CD4-positive, alpha-beta memory T cell (primary cell): ENCODE measurements at regions of chr1 and their contacts with region 1.

Region 1: DNA sequence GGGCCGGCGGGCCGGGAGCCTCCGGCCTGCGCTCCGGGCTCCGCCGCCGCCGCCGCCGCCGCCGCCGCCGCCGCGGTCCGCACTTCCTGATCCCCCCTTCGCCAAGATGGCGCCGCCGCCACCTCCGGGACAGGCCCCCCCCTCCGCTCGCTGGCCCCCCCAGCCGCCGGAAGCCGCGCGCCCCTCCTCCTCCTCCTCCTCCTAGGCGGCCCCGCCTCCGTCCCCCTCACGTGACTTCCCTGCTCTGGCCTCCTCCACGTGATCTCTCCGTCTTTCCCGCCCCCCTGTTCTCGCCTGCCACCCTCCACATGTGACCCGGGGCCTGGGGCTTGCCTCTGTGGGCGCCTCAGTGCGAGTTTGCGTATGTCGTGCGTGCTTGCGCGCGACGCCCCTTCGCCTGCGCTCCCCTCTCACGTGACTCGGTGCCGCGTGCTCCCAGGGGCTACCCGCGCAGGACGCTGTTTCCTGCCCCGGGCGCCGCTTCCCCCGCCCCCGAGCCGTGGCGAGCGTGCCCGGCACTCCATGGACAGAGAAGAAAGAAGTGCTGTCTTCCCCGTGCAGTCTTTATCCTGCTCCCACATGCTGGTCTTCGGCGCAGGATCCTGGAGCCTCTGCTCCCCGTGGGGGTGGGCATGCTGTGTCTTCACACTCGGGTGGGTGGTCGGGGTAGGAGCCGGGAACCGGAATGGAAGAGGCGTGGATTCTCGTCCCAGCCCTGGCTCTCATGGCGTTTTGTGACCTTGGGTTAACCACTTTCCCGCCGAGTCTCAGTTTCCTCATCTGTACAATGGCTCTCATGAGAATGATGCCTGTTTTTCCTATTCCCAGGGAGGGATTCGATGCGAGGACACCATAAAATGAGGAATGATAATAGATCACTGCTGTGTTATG is at the start of gene UBE2Q1:
- DNase-seq: peak; percentile 99 to 100 (median 100)
- H3K4me3 ChIP-seq: peak within 1 kb of the TSS; percentile 83 to 84
- H3K4me3 Mint-ChIP-seq: peak within 1 kb of the TSS; percentile 91 to 97 (median 94)
- H3K27ac ChIP-seq: peak within 1 kb of the TSS; percentile 82
- H3K27ac Mint-ChIP-seq: peak within 1 kb of the TSS; percentile 85 to 96 (median 94)
- H3K4me1 ChIP-seq: peaks cover 38% of the 10 kb centered on the region
- H3K4me1 Mint-ChIP-seq: peaks cover 22 to 45% (median 38%) of the 10 kb centered on the region in 4 donors
- H3K27me3 ChIP-seq: no peaks in the 10 kb centered on the region
- H3K27me3 Mint-ChIP-seq: no peaks in the 10 kb centered on the region
- total RNA-seq, gene UBE2Q1: 112 to 132 TPM

Region 2: DNA sequence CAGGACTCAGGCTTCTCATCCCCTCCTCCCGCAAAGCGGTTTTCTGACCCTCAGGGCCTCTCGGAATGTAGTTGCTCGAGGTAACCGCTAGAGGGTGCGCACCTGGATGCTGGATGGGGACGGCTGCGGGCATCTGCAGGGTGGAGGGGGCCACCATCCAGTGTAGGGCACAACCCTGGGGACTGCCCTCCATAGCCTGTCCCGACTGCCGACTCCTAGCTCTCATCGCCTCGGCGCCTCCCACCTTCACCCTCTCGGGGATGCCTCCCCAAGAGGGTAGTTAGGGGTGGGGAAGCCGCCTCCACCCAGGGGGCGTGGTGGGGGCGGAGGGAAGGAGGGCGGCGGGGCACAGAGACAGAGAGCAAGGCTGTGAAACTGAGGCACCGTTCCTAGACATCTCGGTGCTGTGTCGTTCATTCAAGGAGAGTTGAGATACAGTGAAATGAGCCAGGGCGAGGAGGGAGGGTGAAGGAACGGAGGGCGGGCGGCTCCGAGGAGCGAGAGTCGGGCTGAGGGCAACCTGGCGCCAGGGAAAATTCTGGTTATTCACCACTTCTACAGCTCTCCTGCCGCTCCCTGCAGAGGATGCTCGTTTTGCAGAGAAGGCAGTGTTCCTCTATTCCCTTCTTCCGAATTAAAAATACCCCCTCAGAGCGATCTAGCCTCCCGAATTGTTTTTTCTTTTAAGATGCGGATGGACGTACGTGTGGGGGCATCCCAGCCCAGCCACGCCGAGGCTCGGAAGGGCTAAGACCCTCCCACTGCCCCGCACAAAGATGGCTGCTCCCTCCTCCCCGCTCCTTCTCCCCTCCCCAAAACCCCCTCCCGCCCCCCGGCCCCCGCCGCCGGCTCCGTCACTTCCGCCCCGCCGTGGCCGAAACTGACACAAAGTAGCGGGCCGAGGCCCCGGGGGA is 233.9 kb before region 1 on chr1 and contains the start of gene ATP8B2:
- CTCF ChIA-PET with region 1: no interaction called
- POLR2A ChIA-PET with region 1: interaction called, 3 read pairs
- intact Hi-C with region 1: loop called (anchors 10 kb)
- DNase-seq: peak; percentile 79 to 85 (median 81)
- H3K4me3 ChIP-seq: peak within 1 kb of the TSS; percentile 61 to 66
- H3K4me3 Mint-ChIP-seq: peak within 1 kb of the TSS; percentile 93 to 99 (median 98)
- H3K27ac ChIP-seq: peak within 1 kb of the TSS; percentile 89
- H3K27ac Mint-ChIP-seq: peak within 1 kb of the TSS; percentile 86 to 98 (median 96)
- H3K4me1 ChIP-seq: peaks cover 41% of the 10 kb centered on the region
- H3K4me1 Mint-ChIP-seq: peaks cover 22 to 49% (median 32%) of the 10 kb centered on the region in 4 donors
- H3K27me3 ChIP-seq: no peaks in the 10 kb centered on the region
- H3K27me3 Mint-ChIP-seq: no peaks in the 10 kb centered on the region
- total RNA-seq, gene ATP8B2: 186 TPM

Region 3: GRCh38 chr1:154533952-154534844 is 24.6 kb before region 1 on chr1:
- CTCF ChIA-PET with region 1: no interaction called
- POLR2A ChIA-PET with region 1: no interaction called
- intact Hi-C with region 1: no loop called
- DNase-seq: peak in 1 of 5 donors; percentile 10
- H3K4me3 ChIP-seq: no peak overlapping the region
- H3K4me3 Mint-ChIP-seq: no peak overlapping the region
- H3K27ac ChIP-seq: no peak overlapping the region
- H3K27ac Mint-ChIP-seq: no peak overlapping the region
- H3K4me1 ChIP-seq: no peaks in the 10 kb centered on the region
- H3K4me1 Mint-ChIP-seq: no peaks in the 10 kb centered on the region
- H3K27me3 ChIP-seq: peaks cover 5% of the 10 kb centered on the region
- H3K27me3 Mint-ChIP-seq: peaks cover 3 to 7% of the 10 kb centered on the region in 2 donors

Region 4: GRCh38 chr1:154595621-154596020 is 36.8 kb after region 1 on chr1:
- CTCF ChIA-PET with region 1: no interaction called
- POLR2A ChIA-PET with region 1: no interaction called
- intact Hi-C with region 1: no loop called
- DNase-seq: no peak
- H3K4me3 ChIP-seq: no peak overlapping the region
- H3K4me3 Mint-ChIP-seq: no peak overlapping the region
- H3K27ac ChIP-seq: no peak overlapping the region
- H3K27ac Mint-ChIP-seq: peak overlapping the region in 2 of 7 donors; percentile 42 to 71
- H3K4me1 ChIP-seq: peaks cover 13% of the 10 kb centered on the region
- H3K4me1 Mint-ChIP-seq: peaks cover 6 to 32% (median 19%) of the 10 kb centered on the region in 4 donors
- H3K27me3 ChIP-seq: no peaks in the 10 kb centered on the region
- H3K27me3 Mint-ChIP-seq: no peaks in the 10 kb centered on the region

Region 5: GRCh38 chr1:154627257-154628120 is 68.7 kb after region 1 on chr1:
- CTCF ChIA-PET with region 1: interaction called, 4 read pairs
- POLR2A ChIA-PET with region 1: no interaction called
- intact Hi-C with region 1: loop called (anchors 2 kb)
- DNase-seq: peak; percentile 87 to 92 (median 88)
- H3K4me3 ChIP-seq: peak overlapping the region; percentile 82 to 85
- H3K4me3 Mint-ChIP-seq: peak overlapping the region; percentile 92 to 99 (median 96)
- H3K27ac ChIP-seq: peak overlapping the region; percentile 92
- H3K27ac Mint-ChIP-seq: peak overlapping the region; percentile 95 to 100 (median 100)
- H3K4me1 ChIP-seq: peaks cover 22% of the 10 kb centered on the region
- H3K4me1 Mint-ChIP-seq: peaks cover 22 to 51% (median 36%) of the 10 kb centered on the region in 4 donors
- H3K27me3 ChIP-seq: no peaks in the 10 kb centered on the region
- H3K27me3 Mint-ChIP-seq: peaks cover 1 to 4% of the 10 kb centered on the region in 2 donors

Region 6: DNA sequence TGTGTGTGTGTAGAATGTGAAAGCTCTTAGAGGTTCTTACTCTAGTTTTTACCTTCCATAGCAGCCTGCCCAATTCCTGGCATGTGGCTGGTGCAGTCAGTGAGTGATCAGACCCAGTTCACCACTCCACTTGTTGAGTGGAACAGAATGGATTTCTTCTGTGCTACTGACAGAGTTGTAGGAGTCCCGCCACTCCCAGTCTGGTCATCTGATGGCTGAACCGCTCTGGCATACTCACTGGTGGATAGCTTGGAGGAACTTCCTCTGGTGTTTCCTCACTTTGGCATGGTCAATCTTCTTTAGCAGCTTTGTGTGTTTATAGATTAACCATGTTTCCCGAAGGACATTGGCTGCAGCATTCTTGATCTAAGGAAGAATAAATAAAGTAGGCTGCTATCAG is 155.8 kb after region 1 on chr1:
- CTCF ChIA-PET with region 1: no interaction called
- POLR2A ChIA-PET with region 1: no interaction called
- intact Hi-C with region 1: no loop called
- DNase-seq: no peak
- H3K4me3 ChIP-seq: no peak overlapping the region
- H3K4me3 Mint-ChIP-seq: no peak overlapping the region
- H3K27ac ChIP-seq: no peak overlapping the region
- H3K27ac Mint-ChIP-seq: peak overlapping the region in 1 of 7 donors; percentile 12
- H3K4me1 ChIP-seq: peaks cover 1% of the 10 kb centered on the region
- H3K4me1 Mint-ChIP-seq: peaks cover 8 to 22% (median 12%) of the 10 kb centered on the region in 4 donors
- H3K27me3 ChIP-seq: no peaks in the 10 kb centered on the region
- H3K27me3 Mint-ChIP-seq: no peaks in the 10 kb centered on the region

Region 7: GRCh38 chr1:154791292-154792166 is 232.7 kb after region 1 on chr1:
- CTCF ChIA-PET with region 1: interaction called, 8 read pairs
- POLR2A ChIA-PET with region 1: no interaction called
- intact Hi-C with region 1: loop called (anchors 1 kb)
- DNase-seq: peak; percentile 82 to 94 (median 86)
- H3K4me3 ChIP-seq: peak overlapping the region in 1 of 2 donors; percentile 24
- H3K4me3 Mint-ChIP-seq: peak overlapping the region in 7 of 8 donors; percentile 68 to 87 (median 76)
- H3K27ac ChIP-seq: peak overlapping the region; percentile 40
- H3K27ac Mint-ChIP-seq: peak overlapping the region; percentile 61 to 92 (median 86)
- H3K4me1 ChIP-seq: peaks cover 28% of the 10 kb centered on the region
- H3K4me1 Mint-ChIP-seq: peaks cover 18 to 33% (median 24%) of the 10 kb centered on the region in 4 donors
- H3K27me3 ChIP-seq: no peaks in the 10 kb centered on the region
- H3K27me3 Mint-ChIP-seq: peaks cover 0 to 5% of the 10 kb centered on the region in 2 donors

Region 8: DNA sequence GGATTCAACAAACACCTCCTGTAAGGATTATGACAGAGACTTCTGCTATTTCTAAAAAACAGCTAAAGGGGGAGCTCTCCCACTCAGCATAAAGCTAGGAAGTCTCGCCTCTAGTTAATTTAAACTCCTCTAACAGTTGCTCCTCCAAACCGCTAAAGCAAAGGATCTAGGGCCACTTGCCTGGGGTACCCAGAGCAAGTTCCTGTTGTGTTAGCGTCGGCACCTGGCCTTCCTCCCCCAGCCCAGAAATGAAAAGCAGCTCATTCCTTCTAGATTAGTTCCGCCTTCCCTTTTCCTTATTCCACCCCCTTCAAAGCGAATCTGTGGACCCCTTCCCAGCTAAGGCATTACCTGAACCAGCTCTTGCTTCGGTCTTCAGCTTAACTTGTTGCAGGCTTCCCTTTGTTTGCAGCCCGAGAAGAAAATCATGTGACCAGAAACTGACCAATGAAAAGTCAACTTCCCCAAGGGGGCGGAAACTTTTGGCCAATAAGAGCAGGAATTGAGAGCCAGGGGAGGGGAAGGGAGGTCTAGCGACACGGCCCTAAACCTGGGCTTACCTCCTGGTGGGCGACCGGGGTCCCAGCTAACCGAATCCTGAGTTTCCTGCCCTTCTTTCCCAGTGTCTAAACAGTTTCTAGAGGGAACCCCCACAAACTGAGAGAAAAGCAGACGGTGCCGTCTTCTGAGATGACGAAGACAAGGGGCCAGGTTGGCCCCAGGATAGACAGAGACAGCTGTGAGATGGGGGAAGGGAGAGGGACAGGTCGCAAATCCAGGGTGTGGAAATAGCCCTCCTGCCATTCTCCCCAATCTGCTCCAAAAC is 397.1 kb after region 1 on chr1 and contains the start of gene PBXIP1:
- CTCF ChIA-PET with region 1: interaction called, 6 read pairs
- POLR2A ChIA-PET with region 1: interaction called, 5 read pairs
- intact Hi-C with region 1: loop called (anchors 2 kb)
- DNase-seq: peak; percentile 92 to 94 (median 92)
- H3K4me3 ChIP-seq: peak within 1 kb of the TSS; percentile 80 to 90
- H3K4me3 Mint-ChIP-seq: peak within 1 kb of the TSS; percentile 94 to 100 (median 98)
- H3K27ac ChIP-seq: peak within 1 kb of the TSS; percentile 100
- H3K27ac Mint-ChIP-seq: peak within 1 kb of the TSS; percentile 98 to 100 (median 100)
- H3K4me1 ChIP-seq: peaks cover 75% of the 10 kb centered on the region
- H3K4me1 Mint-ChIP-seq: peaks cover 43 to 87% (median 74%) of the 10 kb centered on the region in 4 donors
- H3K27me3 ChIP-seq: no peaks in the 10 kb centered on the region
- H3K27me3 Mint-ChIP-seq: no peaks in the 10 kb centered on the region
- total RNA-seq, gene PBXIP1: 435 to 438 TPM

Region 9: DNA sequence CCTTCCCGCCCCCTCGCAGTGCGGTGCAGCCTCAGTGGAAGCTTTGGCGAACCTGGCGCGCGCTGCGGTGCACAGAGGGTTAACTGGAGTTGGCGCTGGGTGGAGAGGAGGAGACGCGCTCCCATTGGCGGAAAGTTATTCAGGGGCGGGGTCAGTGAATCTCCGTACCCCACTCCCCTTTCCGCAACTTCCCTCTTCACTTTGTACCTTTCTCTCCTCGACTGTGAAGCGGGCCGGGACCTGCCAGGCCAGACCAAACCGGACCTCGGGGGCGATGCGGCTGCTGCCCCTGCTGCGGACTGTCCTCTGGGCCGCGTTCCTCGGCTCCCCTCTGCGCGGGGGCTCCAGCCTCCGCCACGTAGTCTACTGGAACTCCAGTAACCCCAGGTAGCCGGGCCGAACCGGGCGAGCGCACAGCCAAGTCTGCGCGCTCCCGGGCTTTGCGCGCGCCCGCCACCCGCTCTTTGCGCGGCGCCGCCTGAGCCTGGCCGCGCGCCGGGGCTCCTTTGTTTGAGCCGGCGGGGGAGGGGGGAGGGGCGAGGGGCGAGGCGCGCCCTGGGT is 504.8 kb after region 1 on chr1 and contains the start of gene EFNA4:
- CTCF ChIA-PET with region 1: interaction called, 12 read pairs
- POLR2A ChIA-PET with region 1: interaction called, 4 read pairs
- intact Hi-C with region 1: loop called (anchors 1 kb)
- DNase-seq: peak; percentile 83 to 87 (median 86)
- H3K4me3 ChIP-seq: peak within 1 kb of the TSS; percentile 63 to 70
- H3K4me3 Mint-ChIP-seq: peak within 1 kb of the TSS; percentile 91 to 99 (median 94)
- H3K27ac ChIP-seq: peak within 1 kb of the TSS; percentile 51
- H3K27ac Mint-ChIP-seq: peak within 1 kb of the TSS; percentile 81 to 94 (median 85)
- H3K4me1 ChIP-seq: peaks cover 35% of the 10 kb centered on the region
- H3K4me1 Mint-ChIP-seq: peaks cover 23 to 52% (median 32%) of the 10 kb centered on the region in 4 donors
- H3K27me3 ChIP-seq: no peaks in the 10 kb centered on the region
- H3K27me3 Mint-ChIP-seq: no peaks in the 10 kb centered on the region
- total RNA-seq, gene EFNA4: 6.0 to 8.5 TPM